ENCODE measurements at regions of chr4 and their contacts with region 1.

Region 1: GRCh38 chr4:47933840-47934239 is 19.5 kb upstream of the NFXL1 start:
- DNase-seq: peak; percentile 60
- ATAC-seq: peak; percentile 93
- H3K4me3 ChIP-seq: no peak overlapping the region
- H3K27ac ChIP-seq: no peak overlapping the region
- H3K4me1 ChIP-seq: no peaks in the 10 kb centered on the region
- H3K27me3 ChIP-seq: peaks cover 14% of the 10 kb centered on the region
- CTCF ChIP-seq: peak; percentile 83
- POLR2A ChIP-seq: no peak
- RAD21 ChIP-seq: peak; percentile 80

Region 2: DNA sequence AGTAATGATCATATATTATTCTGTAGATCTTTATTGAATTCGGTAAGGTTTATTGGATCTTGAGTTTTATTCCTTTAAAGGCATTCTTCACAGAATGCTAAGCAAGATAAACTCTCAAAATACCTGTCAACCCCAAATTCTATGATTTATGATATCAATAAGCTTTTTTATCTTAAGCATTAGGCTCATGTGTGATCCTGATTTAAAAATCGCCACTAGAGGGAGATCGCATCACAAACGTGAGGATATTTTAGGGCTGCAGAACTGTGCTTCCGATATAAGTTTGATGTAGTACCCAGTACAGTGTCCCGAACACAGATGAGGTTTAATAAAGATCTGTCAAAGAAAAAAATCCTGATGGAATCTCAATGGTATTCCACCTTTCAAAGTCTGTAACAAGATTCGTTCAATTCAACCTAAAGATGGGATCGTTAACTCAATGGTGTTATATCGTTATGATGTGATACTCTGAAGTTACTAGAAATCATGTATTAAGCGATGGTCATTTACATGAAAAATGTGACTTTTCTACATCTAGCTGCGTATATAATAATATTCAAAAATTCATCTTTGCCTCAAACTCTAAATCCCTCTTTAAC is 264.9 kb before region 1 on chr4:
- CTCF ChIA-PET with region 1: interaction called, 6 read pairs
- POLR2A ChIA-PET with region 1: no interaction called
- dilution Hi-C with region 1: no loop called
- in situ Hi-C with region 1: no loop called
- intact Hi-C with region 1: loop called (anchors 1 kb)
- DNase-seq: peak; percentile 65
- ATAC-seq: peak; percentile 87
- H3K4me3 ChIP-seq: no peak overlapping the region
- H3K27ac ChIP-seq: no peak overlapping the region
- H3K4me1 ChIP-seq: no peaks in the 10 kb centered on the region
- H3K27me3 ChIP-seq: peaks cover 5% of the 10 kb centered on the region
- CTCF ChIP-seq: peak; percentile 68
- POLR2A ChIP-seq: no peak
- RAD21 ChIP-seq: peak; percentile 63

Region 3: GRCh38 chr4:47686294-47686872 is 247.5 kb before region 1 on chr4:
- CTCF ChIA-PET with region 1: interaction called, 4 read pairs
- POLR2A ChIA-PET with region 1: no interaction called
- dilution Hi-C with region 1: no loop called
- in situ Hi-C with region 1: loop called (anchors 10 kb)
- intact Hi-C with region 1: loop called (anchors 1 kb)
- DNase-seq: peak; percentile 38
- ATAC-seq: peak; percentile 69
- H3K4me3 ChIP-seq: no peak overlapping the region
- H3K27ac ChIP-seq: no peak overlapping the region
- H3K4me1 ChIP-seq: no peaks in the 10 kb centered on the region
- H3K27me3 ChIP-seq: peaks cover 10% of the 10 kb centered on the region
- CTCF ChIP-seq: peak; percentile 71
- POLR2A ChIP-seq: no peak
- RAD21 ChIP-seq: peak; percentile 68

Region 4: GRCh38 chr4:47704693-47705325 is 229.0 kb before region 1 on chr4:
- CTCF ChIA-PET with region 1: no interaction called
- POLR2A ChIA-PET with region 1: no interaction called
- dilution Hi-C with region 1: no loop called
- in situ Hi-C with region 1: no loop called
- intact Hi-C with region 1: loop called (anchors 1 kb)
- DNase-seq: peak; percentile 37
- ATAC-seq: peak; percentile 93
- H3K4me3 ChIP-seq: no peak overlapping the region
- H3K27ac ChIP-seq: no peak overlapping the region
- H3K4me1 ChIP-seq: no peaks in the 10 kb centered on the region
- H3K27me3 ChIP-seq: peaks cover 9% of the 10 kb centered on the region
- CTCF ChIP-seq: peak; percentile 58
- POLR2A ChIP-seq: no peak
- RAD21 ChIP-seq: peak; percentile 69

Region 5: GRCh38 chr4:48103483-48104139 is 169.8 kb after region 1 on chr4:
- CTCF ChIA-PET with region 1: no interaction called
- POLR2A ChIA-PET with region 1: no interaction called
- dilution Hi-C with region 1: no loop called
- in situ Hi-C with region 1: no loop called
- intact Hi-C with region 1: no loop called
- DNase-seq: no peak
- ATAC-seq: no peak
- H3K4me3 ChIP-seq: no peak overlapping the region
- H3K27ac ChIP-seq: no peak overlapping the region
- H3K4me1 ChIP-seq: no peaks in the 10 kb centered on the region
- H3K27me3 ChIP-seq: no peaks in the 10 kb centered on the region
- CTCF ChIP-seq: no peak
- POLR2A ChIP-seq: no peak
- RAD21 ChIP-seq: no peak